Vagina (tissue), 2 donors: ENCODE measurements at regions of chr10 and their contacts with region 1.

Region 1: GRCh38 chr10:60967854-60968484 is 24.0 kb upstream of the RHOBTB1 start:
- DNase-seq: no peak
- H3K4me3 ChIP-seq: no peak overlapping the region
- H3K27ac ChIP-seq: no peak overlapping the region
- H3K4me1 ChIP-seq: peaks cover 22% of the 10 kb centered on the region
- H3K27me3 ChIP-seq: no peaks in the 10 kb centered on the region
- CTCF ChIP-seq: no peak
- POLR2A ChIP-seq: no peak

Region 2: GRCh38 chr10:60810809-60811182 is 157.2 kb before region 1 on chr10:
- intact Hi-C with region 1: loop called (anchors 2 kb)
- DNase-seq: no peak
- H3K4me3 ChIP-seq: no peak overlapping the region
- H3K27ac ChIP-seq: peak overlapping the region; percentile 79
- H3K4me1 ChIP-seq: peaks cover 45% of the 10 kb centered on the region
- H3K27me3 ChIP-seq: no peaks in the 10 kb centered on the region
- CTCF ChIP-seq: no peak
- POLR2A ChIP-seq: no peak

Region 3: GRCh38 chr10:60883187-60883586 is 84.8 kb before region 1 on chr10:
- intact Hi-C with region 1: no loop called
- DNase-seq: no peak
- H3K4me3 ChIP-seq: no peak overlapping the region
- H3K27ac ChIP-seq: no peak overlapping the region
- H3K4me1 ChIP-seq: peaks cover 3% of the 10 kb centered on the region
- H3K27me3 ChIP-seq: no peaks in the 10 kb centered on the region
- CTCF ChIP-seq: no peak
- POLR2A ChIP-seq: no peak